ENCODE measurements at regions of chr1 and their contacts with region 1.

Region 1: DNA sequence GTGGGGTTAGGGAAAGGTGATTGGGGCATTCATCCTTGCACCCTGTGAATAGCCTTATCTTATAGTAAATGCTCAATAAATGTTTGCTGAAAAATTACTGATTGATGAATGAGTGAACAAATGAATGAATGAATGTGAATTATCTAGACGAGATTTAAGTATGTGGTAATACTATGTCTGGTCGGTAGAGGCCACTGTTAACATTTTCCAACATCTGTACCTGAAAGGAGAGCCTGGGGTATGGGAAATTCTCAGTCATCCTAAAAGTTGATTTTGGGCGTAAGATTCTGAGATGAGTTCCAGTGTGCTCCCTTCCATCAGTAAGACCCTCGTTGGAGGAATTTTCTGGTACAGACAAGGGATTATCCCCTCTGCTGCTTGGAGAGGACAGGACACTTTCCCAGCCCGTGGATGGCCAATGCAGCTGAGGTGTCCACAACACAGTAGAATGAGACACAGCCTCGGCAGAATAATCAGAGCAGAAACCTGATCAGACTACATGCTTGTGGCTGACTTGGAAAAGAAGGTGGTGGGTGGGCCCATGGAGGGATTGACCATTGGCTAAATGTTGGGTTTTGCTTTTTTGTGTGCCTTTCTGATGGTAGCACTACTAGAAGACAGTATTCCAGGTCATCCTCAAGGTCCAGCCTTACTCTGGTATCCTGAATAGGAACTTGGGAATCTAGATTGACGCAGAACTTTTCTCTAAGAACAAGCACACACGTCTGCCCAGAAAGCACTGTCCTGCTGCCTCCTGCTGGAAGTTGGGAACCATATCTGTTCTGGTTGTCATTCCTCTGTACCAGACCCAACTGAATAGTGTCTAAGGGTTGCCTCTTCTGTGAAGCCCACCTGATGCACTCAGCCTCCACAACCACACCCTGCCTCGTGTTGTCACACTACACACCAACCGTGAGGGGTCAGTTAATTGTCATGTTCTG is 262.0 kb downstream of the TNR start:
- DNase-seq: no peak
- ATAC-seq: peak in 3 of 4 donors; percentile 34 to 55 (median 36)
- H3K4me3 ChIP-seq: no peak overlapping the region
- H3K27ac ChIP-seq: no peak overlapping the region
- H3K4me1 ChIP-seq: no peaks in the 10 kb centered on the region
- H3K27me3 ChIP-seq: peaks cover 0 to 9% (median 0%) of the 10 kb centered on the region in 9 donors
- CTCF ChIP-seq: peak; percentile 37 to 72 (median 64)
- POLR2A ChIP-seq: no peak

Region 2: DNA sequence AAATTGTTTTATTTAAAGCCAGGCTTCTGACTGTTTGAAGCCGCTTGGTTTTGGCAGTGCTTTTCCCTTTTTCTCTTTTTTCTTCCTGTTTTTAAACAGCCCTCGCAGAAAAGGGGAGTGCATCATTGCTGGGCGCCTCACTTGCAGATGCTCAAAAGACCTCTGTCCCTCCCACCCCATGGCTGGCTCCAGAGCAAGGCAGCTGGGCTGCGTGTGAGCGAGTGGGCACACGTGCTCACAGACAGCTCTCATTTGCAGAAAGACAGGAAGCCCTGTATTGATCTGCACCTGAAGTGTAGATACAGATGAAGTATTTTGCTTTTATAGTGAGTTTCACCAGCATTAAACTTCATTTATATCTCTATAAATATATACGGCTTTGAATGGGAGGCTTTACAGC is 253.2 kb after region 1 on chr1:
- intact Hi-C with region 1: loop called in 2 of 10 experiments (anchors 5 to 10 kb)
- DNase-seq: no peak
- ATAC-seq: no peak
- H3K4me3 ChIP-seq: no peak overlapping the region
- H3K27ac ChIP-seq: no peak overlapping the region
- H3K4me1 ChIP-seq: no peaks in the 10 kb centered on the region
- H3K27me3 ChIP-seq: peaks cover 0 to 17% (median 5%) of the 10 kb centered on the region in 9 donors
- CTCF ChIP-seq: no peak
- POLR2A ChIP-seq: no peak

Region 3: DNA sequence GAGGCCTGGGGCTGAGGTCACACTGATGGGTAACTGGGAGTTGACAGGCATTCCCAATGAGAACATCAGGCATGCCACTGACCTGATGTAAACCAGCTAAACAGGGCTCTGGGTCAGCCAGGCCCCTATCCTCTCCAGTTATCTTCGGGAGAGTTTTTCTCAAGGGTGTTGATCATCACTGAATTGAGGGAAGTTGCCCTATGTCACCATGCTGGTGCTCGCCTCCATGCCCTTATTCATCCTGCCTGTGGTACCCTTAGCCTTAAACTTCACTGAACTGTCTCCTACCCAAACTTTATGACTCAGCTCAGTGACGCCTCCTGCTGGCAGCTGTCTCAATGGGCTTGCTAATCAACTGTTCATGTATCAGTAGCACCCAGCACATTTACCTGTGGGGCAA is 342.7 kb after region 1 on chr1:
- intact Hi-C with region 1: loop called in 1 of 10 experiments (anchors 10 kb)
- DNase-seq: peak in 4 of 5 donors; percentile 16 to 36 (median 32)
- ATAC-seq: peak in 3 of 4 donors; percentile 69 to 93 (median 71)
- H3K4me3 ChIP-seq: no peak overlapping the region
- H3K27ac ChIP-seq: no peak overlapping the region
- H3K4me1 ChIP-seq: peaks cover 0 to 2% (median 0%) of the 10 kb centered on the region in 12 donors
- H3K27me3 ChIP-seq: no peaks in the 10 kb centered on the region
- CTCF ChIP-seq: peak in 8 of 12 donors; percentile 12 to 39 (median 24)
- POLR2A ChIP-seq: no peak

Region 4: DNA sequence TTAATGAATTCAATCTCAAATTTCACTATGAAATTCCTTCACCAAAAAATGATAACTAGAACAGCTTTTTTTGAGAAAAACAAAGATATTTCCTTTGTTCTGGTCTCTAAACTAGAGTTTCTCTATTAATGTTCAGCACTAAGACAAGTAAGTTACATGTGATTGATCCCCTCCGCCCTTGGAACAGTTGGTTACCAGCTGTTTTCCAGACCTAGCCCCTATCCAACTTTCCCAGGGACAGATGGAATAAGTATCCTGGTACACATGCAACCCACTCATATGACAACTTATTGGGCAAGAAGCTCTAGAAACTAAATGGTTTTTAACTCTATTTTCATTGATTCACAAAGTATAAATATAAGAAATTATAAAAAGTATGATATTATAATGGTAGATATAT is 585.3 kb after region 1 on chr1:
- intact Hi-C with region 1: loop called in 8 of 10 experiments (anchors 5 to 10 kb)
- DNase-seq: no peak
- ATAC-seq: no peak
- H3K4me3 ChIP-seq: no peak overlapping the region
- H3K27ac ChIP-seq: no peak overlapping the region
- H3K4me1 ChIP-seq: no peaks in the 10 kb centered on the region
- H3K27me3 ChIP-seq: no peaks in the 10 kb centered on the region
- CTCF ChIP-seq: no peak
- POLR2A ChIP-seq: no peak

Measured in heart left ventricle (tissue), 16 donors.